ENCODE measurements at regions of chr3 and their contacts with region 1.

Region 1: DNA sequence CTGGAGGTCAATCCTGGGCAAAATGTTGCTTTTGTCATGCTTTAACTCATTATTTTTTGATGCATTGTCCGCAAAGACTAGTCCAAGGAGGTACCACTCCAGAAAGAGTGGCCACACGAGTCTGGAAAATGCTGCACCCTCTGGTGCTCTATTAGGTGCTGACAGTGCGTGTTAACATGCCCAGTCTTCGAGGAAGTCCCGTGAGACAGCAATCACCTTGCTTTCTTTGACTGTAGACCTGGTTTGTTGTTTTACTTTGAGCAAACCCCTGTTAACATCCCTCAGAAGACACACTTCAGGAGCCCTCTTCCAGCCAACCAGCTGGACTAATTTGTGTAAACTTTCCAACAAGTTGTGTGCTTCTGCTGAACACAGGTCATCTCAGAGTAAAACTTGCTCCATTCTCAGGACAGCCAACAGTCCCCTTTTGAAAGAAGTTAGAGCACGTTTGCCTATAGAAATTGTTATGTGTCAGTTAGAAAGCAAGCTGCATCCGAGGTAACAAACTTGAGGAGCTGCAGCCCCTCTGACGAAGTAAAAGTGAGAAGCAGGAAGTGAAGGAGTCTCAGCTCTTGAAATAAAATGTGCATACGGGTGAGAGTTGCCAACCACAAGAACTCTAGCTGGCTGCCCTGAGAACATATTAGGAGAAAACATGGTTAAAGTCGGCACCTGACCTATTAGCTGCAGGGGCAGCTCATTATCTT is 205.0 kb downstream of the LPP start:
- DNase-seq: peak; percentile 30 to 72
- ATAC-seq: peak; percentile 78 to 88 (median 85)
- H3K4me3 ChIP-seq: peak overlapping the region; percentile 14
- H3K4me3 Mint-ChIP-seq: peak overlapping the region; percentile 78
- H3K27ac ChIP-seq: peak overlapping the region; percentile 78
- H3K27ac Mint-ChIP-seq: peak overlapping the region; percentile 74 to 79
- H3K4me1 ChIP-seq: peaks cover 29% of the 10 kb centered on the region
- H3K4me1 Mint-ChIP-seq: peaks cover 52 to 56% of the 10 kb centered on the region in 2 donors
- H3K27me3 ChIP-seq: no peaks in the 10 kb centered on the region
- H3K27me3 Mint-ChIP-seq: peaks cover 0 to 7% of the 10 kb centered on the region in 2 donors
- CTCF ChIP-seq: no peak

Region 2: DNA sequence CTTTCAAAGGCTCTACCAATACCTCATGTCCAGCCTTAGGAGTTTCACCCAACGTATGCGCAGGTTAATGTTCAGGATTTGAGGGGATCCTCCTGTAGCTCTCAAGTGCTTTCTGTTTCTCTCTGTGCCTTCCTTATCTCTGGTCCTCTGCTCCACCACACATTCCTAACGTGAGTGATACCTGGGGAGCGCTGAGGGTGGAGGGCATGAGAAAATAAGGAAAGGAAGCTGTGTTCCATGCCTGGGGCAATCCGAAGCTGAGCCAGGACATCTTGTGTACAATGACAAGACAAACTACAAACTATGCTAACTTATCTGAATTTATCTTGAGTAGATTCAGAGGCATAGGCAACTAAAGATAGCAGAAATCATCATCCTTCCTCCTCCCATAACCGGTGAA is 825.1 kb before region 1 on chr3:
- intact Hi-C with region 1: no loop called
- DNase-seq: no peak
- ATAC-seq: no peak
- H3K4me3 ChIP-seq: no peak overlapping the region
- H3K4me3 Mint-ChIP-seq: no peak overlapping the region
- H3K27ac ChIP-seq: no peak overlapping the region
- H3K27ac Mint-ChIP-seq: no peak overlapping the region
- H3K4me1 ChIP-seq: no peaks in the 10 kb centered on the region
- H3K4me1 Mint-ChIP-seq: no peaks in the 10 kb centered on the region
- H3K27me3 ChIP-seq: peaks cover 5% of the 10 kb centered on the region
- H3K27me3 Mint-ChIP-seq: peaks cover 16 to 44% of the 10 kb centered on the region in 2 donors
- CTCF ChIP-seq: no peak

Region 3: GRCh38 chr3:188339410-188340295 is 19.3 kb before region 1 on chr3:
- intact Hi-C with region 1: loop called (anchors 1 kb)
- DNase-seq: peak; percentile 37 to 69
- ATAC-seq: peak; percentile 83 to 93 (median 91)
- H3K4me3 ChIP-seq: no peak overlapping the region
- H3K4me3 Mint-ChIP-seq: peak overlapping the region; percentile 79
- H3K27ac ChIP-seq: peak overlapping the region; percentile 62
- H3K27ac Mint-ChIP-seq: peak overlapping the region; percentile 82
- H3K4me1 ChIP-seq: peaks cover 7% of the 10 kb centered on the region
- H3K4me1 Mint-ChIP-seq: peaks cover 44 to 55% of the 10 kb centered on the region in 2 donors
- H3K27me3 ChIP-seq: no peaks in the 10 kb centered on the region
- H3K27me3 Mint-ChIP-seq: peaks cover 0 to 9% of the 10 kb centered on the region in 2 donors
- CTCF ChIP-seq: no peak

Region 4: GRCh38 chr3:188400494-188401243 is 41.7 kb after region 1 on chr3:
- intact Hi-C with region 1: loop called (anchors 5 kb)
- DNase-seq: peak in 1 of 2 donors; percentile 30
- ATAC-seq: peak; percentile 38 to 64 (median 63)
- H3K4me3 ChIP-seq: no peak overlapping the region
- H3K4me3 Mint-ChIP-seq: no peak overlapping the region
- H3K27ac ChIP-seq: peak overlapping the region; percentile 67
- H3K27ac Mint-ChIP-seq: peak overlapping the region; percentile 58 to 71
- H3K4me1 ChIP-seq: peaks cover 11% of the 10 kb centered on the region
- H3K4me1 Mint-ChIP-seq: peaks cover 74 to 91% of the 10 kb centered on the region in 2 donors
- H3K27me3 ChIP-seq: no peaks in the 10 kb centered on the region
- H3K27me3 Mint-ChIP-seq: no peaks in the 10 kb centered on the region
- CTCF ChIP-seq: no peak

Region 5: GRCh38 chr3:188439080-188439479 is 80.1 kb after region 1 on chr3:
- intact Hi-C with region 1: loop called (anchors 5 kb)
- DNase-seq: peak in 1 of 2 donors; percentile 67
- ATAC-seq: peak; percentile 80 to 87 (median 80)
- H3K4me3 ChIP-seq: no peak overlapping the region
- H3K4me3 Mint-ChIP-seq: peak overlapping the region; percentile 71
- H3K27ac ChIP-seq: peak overlapping the region; percentile 90
- H3K27ac Mint-ChIP-seq: peak overlapping the region; percentile 92 to 95
- H3K4me1 ChIP-seq: peaks cover 22% of the 10 kb centered on the region
- H3K4me1 Mint-ChIP-seq: peaks cover 58 to 62% of the 10 kb centered on the region in 2 donors
- H3K27me3 ChIP-seq: no peaks in the 10 kb centered on the region
- H3K27me3 Mint-ChIP-seq: no peaks in the 10 kb centered on the region
- CTCF ChIP-seq: no peak

Region 6: GRCh38 chr3:188578576-188579363 is 219.8 kb after region 1 on chr3:
- intact Hi-C with region 1: no loop called
- DNase-seq: no peak
- ATAC-seq: no peak
- H3K4me3 ChIP-seq: no peak overlapping the region
- H3K4me3 Mint-ChIP-seq: no peak overlapping the region
- H3K27ac ChIP-seq: no peak overlapping the region
- H3K27ac Mint-ChIP-seq: peak overlapping the region; percentile 12 to 73
- H3K4me1 ChIP-seq: peaks cover 4% of the 10 kb centered on the region
- H3K4me1 Mint-ChIP-seq: peaks cover 25 to 28% of the 10 kb centered on the region in 2 donors
- H3K27me3 ChIP-seq: no peaks in the 10 kb centered on the region
- H3K27me3 Mint-ChIP-seq: no peaks in the 10 kb centered on the region
- CTCF ChIP-seq: no peak

Measured in natural killer cell (primary cell).